ENCODE measurements at regions of chr14 and their contacts with region 1.

Region 1: DNA sequence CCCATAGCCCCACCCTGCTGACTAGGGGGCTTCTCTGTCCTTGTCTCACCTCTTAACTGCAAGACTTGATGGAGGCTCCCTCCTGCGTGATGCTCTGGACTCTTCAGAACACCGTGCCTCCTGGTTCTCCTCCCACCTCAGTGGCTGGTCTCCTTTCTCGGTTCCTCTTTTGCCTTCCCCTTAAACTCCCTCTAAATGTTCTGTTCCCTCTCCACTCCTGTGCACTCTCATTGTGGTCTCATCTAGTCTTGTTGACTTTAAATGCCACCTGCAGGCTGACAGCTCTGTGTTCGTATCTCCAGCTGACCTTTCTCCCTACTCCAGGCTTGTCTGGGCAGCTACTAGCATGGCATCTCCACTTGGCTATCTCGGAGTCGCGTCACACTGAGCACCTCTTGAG is 28.3 kb downstream of the DYNC1H1 start:
- DNase-seq: no peak
- ATAC-seq: no peak
- H3K4me3 ChIP-seq: no peak overlapping the region
- H3K27ac ChIP-seq: no peak overlapping the region
- H3K4me1 ChIP-seq: no peaks in the 10 kb centered on the region
- H3K27me3 ChIP-seq: no peaks in the 10 kb centered on the region
- CTCF ChIP-seq: no peak

Region 2: GRCh38 chr14:101737414-101738339 is 255.0 kb before region 1 on chr14:
- intact Hi-C with region 1: no loop called
- DNase-seq: no peak
- ATAC-seq: no peak
- H3K4me3 ChIP-seq: no peak overlapping the region
- H3K27ac ChIP-seq: no peak overlapping the region
- H3K4me1 ChIP-seq: no peaks in the 10 kb centered on the region
- H3K27me3 ChIP-seq: peaks cover 0 to 3% (median 0%) of the 10 kb centered on the region in 3 donors
- CTCF ChIP-seq: no peak

Region 3: GRCh38 chr14:102028421-102029172 is 35.9 kb after region 1 on chr14:
- intact Hi-C with region 1: loop called (anchors 5 kb)
- DNase-seq: no peak
- ATAC-seq: no peak
- H3K4me3 ChIP-seq: no peak overlapping the region
- H3K27ac ChIP-seq: no peak overlapping the region
- H3K4me1 ChIP-seq: no peaks in the 10 kb centered on the region
- H3K27me3 ChIP-seq: no peaks in the 10 kb centered on the region
- CTCF ChIP-seq: no peak

Measured in psoas muscle (tissue), 8 donors.